ENCODE measurements at regions of chr5 and their contacts with region 1.

Region 1: DNA sequence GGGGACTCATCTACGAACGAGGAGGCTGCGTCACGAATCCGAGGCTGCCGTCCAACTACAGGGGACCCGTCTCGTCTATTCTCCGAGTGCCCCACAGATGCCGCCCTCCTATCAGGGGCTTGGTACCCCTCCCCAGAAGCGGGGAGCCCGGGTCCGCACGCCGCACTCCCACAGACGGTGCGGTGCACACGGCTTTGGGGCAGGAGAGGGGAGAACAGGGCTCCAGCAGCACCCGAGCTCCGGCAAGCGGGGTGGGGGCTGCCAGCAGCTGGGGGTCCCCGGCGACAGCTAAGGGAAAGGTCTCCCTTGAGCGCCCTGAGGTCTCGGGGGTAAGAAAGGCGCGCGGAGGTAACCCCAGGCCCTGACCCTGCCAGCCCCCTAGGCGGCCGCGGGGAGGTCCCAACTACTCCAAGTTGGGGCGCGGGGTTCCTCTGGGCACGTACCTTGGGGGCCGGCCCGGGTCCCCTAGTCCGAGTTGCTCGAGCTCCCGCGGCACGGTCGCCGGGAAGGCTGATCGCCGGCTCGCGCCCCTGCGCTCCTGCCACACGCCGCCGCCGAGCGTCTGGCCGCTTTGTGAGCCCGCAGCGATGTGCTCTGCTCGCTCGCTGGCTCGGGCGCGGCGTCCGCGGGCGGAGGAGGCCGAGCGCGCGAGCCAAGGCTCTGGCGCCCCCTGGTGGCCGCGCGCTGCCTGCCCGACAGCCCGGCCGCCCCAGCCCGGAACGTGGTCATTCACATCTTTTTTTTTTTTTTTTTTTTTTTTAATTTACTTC is at the start of gene SPOCK1:
- DNase-seq: peak; percentile 50
- H3K4me3 ChIP-seq: peak within 1 kb of the TSS; percentile 28
- H3K27ac ChIP-seq: no peak within 1 kb of the TSS
- H3K4me1 ChIP-seq: no peaks in the 10 kb centered on the region
- H3K27me3 ChIP-seq: peaks cover 19% of the 10 kb centered on the region
- CTCF ChIP-seq: peak; percentile 78
- total RNA-seq, gene SPOCK1: 2.1 to 8.5 TPM

Region 2: DNA sequence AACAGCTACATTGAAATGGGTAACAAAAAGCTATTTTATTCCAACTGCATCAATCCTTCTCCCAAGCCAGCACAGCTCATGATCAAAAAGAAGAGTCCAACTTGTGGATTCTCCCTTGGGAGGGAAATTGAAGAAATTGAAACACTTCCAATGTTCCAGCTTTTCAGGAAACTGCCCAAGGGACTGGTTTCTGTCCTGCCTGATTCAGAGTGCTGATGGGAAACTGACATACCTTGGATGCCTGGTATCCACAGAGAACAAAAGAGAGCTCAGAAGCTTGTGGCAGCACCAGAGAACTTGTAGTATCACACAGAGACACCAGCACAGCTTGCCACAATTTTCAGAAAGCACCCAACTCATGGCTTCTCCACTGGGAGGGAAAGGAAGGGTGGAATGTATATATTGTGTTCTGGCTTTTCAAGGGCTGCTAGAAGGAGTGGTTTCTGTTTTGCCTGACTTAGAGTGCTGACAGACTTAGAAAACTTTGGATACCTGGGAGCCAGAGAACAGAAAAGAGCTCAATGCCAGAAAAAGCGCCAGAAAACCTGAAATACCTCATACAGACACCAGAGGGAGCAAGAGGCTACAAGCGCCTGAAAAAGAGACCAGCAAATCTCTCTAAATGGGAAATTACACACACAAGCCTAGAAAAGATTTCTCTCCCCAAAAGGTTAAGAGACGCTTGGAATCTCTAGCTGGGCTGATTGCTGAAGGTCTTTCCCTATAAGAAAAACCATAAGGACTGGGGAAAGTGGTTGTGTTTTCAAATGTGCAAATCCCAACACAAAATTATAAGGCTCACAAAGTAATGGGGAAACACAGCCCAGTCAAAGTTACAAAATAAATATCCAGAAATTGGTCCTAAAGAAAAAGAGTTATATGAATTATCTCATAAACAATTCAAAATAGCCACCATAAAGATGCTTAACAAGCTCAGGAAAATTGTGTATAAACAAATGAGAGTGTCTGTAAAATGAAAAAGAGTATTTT is 178.6 kb before region 1 on chr5:
- intact Hi-C with region 1: loop called (anchors 2 kb)
- DNase-seq: peak; percentile 40
- H3K4me3 ChIP-seq: no peak overlapping the region
- H3K27ac ChIP-seq: no peak overlapping the region
- H3K4me1 ChIP-seq: no peaks in the 10 kb centered on the region
- H3K27me3 ChIP-seq: no peaks in the 10 kb centered on the region
- CTCF ChIP-seq: peak; percentile 76

Measured in colonic mucosa (tissue), 4 donors.